ENCODE measurements at regions of chr2 and their contacts with region 1.

Region 1: GRCh38 chr2:134466141-134466540 is 212.3 kb downstream of the MGAT5 start:
- DNase-seq: peak; percentile 31
- H3K4me3 Mint-ChIP-seq: no peak overlapping the region
- H3K27ac Mint-ChIP-seq: no peak overlapping the region
- H3K4me1 Mint-ChIP-seq: no peaks in the 10 kb centered on the region
- H3K27me3 Mint-ChIP-seq: no peaks in the 10 kb centered on the region

Region 2: DNA sequence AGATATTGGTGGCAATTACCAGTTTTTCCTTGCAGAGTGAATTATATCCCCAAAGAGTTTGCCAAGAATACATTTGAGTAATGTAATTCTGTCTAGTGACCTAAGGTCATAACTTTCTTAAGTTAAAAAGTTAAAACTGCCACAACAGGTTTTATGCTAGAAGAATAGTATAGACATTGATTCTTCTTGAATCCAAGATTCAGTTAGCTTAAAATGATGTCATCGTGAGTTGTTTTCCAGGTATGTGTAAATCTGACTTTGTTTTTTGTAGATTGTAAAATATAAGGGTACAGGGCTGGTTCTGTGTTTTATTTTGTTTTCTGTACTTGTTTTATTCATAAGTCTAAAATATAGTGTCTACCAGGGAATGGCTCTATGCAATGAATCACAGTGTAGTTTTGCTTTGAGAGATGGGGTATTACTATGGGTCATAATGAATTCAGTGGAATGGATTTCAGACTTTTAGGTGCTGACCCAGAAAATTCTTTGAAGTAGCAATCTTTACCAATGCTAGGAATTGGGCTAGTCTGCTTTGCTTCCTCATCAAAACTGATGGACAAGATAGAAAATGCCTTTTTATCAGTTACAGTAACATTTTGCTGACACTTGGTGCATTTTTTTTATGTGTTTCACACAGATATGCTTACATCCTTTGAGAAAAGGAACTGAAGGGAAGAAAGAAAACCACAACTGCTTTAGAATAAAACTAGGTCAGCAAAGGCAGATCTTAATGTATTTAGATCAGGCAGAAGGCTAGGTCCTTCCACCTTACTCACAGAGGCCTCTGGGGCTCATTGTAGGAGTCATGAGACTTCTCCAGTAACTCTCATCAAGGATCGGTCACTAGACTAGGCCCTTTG is 233.0 kb before region 1 on chr2:
- CTCF ChIA-PET with region 1: no interaction called
- POLR2A ChIA-PET with region 1: no interaction called
- intact Hi-C with region 1: no loop called
- DNase-seq: peak; percentile 52
- H3K4me3 Mint-ChIP-seq: peak overlapping the region; percentile 34
- H3K27ac Mint-ChIP-seq: peak overlapping the region; percentile 93
- H3K4me1 Mint-ChIP-seq: peaks cover 90% of the 10 kb centered on the region
- H3K27me3 Mint-ChIP-seq: no peaks in the 10 kb centered on the region

Region 3: DNA sequence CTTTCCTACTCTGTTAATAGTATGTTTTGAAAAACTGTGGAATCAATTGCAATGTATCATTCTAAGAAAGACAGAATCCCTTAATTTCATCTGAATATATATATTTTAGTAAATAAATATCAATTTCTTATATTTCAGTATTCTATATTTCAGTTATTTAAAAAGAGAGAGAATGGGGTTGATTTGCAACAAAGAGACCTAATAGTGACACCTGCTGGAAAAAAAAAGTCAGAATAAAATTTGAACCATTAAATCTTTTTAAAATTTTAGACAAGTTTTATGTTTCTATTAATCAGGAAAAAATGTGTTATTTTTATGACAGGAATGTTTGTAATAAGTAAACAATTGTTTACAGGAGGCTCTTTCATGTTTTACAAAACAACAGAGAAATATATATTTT is 431.8 kb after region 1 on chr2:
- CTCF ChIA-PET with region 1: no interaction called
- POLR2A ChIA-PET with region 1: no interaction called
- intact Hi-C with region 1: loop called (anchors 5 kb)
- DNase-seq: no peak
- H3K4me3 Mint-ChIP-seq: no peak overlapping the region
- H3K27ac Mint-ChIP-seq: no peak overlapping the region
- H3K4me1 Mint-ChIP-seq: no peaks in the 10 kb centered on the region
- H3K27me3 Mint-ChIP-seq: no peaks in the 10 kb centered on the region

Measured in activated CD4-positive, alpha-beta memory T cell treated with anti-CD3 and anti-CD28 coated beads for 36 hours (primary cell).